Activated CD4-positive, alpha-beta T cell treated with anti-CD3 and anti-CD28 coated beads for 36 hours (primary cell): ENCODE measurements at regions of chr6 and their contacts with region 1.

Region 1: GRCh38 chr6:37860226-37860839 is 40.8 kb downstream of the ZFAND3 start:
- DNase-seq: peak; percentile 24
- ATAC-seq: no peak
- H3K4me3 Mint-ChIP-seq: no peak overlapping the region
- H3K27ac Mint-ChIP-seq: no peak overlapping the region
- H3K4me1 Mint-ChIP-seq: peaks cover 77% of the 10 kb centered on the region
- H3K27me3 Mint-ChIP-seq: no peaks in the 10 kb centered on the region

Region 2: DNA sequence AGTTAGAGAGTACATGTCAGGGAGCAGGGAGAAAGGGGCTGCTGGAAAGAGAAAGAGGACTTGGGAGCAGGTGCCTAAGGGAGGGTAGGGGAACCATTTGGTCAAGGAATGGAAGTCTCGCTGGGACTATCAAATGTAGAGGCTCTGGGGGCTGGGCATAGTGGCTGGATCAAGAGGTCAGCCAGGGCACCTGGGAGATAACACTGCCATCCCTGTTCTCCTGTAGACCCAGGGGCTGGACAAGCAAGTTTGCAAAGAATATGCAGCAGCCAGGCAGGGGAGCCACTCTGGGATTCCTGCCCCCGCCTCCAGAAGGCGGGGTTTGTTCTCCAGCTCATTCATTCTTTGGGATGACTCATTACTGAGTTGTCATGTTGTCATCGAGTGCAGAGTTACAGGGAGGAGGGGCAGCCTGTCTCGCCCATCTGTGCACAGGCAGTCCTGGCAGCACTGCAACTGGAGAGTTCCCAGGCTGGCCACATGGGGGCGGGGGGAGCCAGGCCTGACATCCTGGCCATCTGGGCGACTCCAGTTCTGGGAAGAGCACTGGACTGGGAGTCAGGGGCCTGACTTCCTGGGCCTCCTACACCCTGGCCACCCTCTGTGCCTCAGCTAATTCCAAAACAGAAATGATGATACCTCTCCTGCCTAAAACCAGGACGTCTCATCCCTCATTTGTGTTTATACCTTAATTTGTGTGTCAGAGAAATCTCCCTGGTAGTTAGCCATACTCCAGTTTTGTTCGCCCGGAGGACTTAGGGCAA is 69.0 kb before region 1 on chr6:
- CTCF ChIA-PET with region 1: no interaction called
- POLR2A ChIA-PET with region 1: no interaction called
- intact Hi-C with region 1: loop called in 1 of 2 experiments (anchors 1 kb)
- DNase-seq: peak; percentile 94
- ATAC-seq: peak; percentile 100
- H3K4me3 Mint-ChIP-seq: no peak overlapping the region
- H3K27ac Mint-ChIP-seq: no peak overlapping the region
- H3K4me1 Mint-ChIP-seq: peaks cover 10% of the 10 kb centered on the region
- H3K27me3 Mint-ChIP-seq: no peaks in the 10 kb centered on the region

Region 3: GRCh38 chr6:37840940-37841300 is 19.4 kb before region 1 on chr6:
- CTCF ChIA-PET with region 1: interaction called, 4 read pairs
- POLR2A ChIA-PET with region 1: interaction called, 4 read pairs
- intact Hi-C with region 1: loop called in 1 of 2 experiments (anchors 2 kb)
- DNase-seq: no peak
- ATAC-seq: peak; percentile 42
- H3K4me3 Mint-ChIP-seq: no peak overlapping the region
- H3K27ac Mint-ChIP-seq: peak overlapping the region; percentile 65
- H3K4me1 Mint-ChIP-seq: peaks cover 56% of the 10 kb centered on the region
- H3K27me3 Mint-ChIP-seq: no peaks in the 10 kb centered on the region

Region 4: GRCh38 chr6:37875561-37876309 is 15.4 kb after region 1 on chr6:
- CTCF ChIA-PET with region 1: no interaction called
- POLR2A ChIA-PET with region 1: no interaction called
- intact Hi-C with region 1: no loop called
- DNase-seq: no peak
- ATAC-seq: no peak
- H3K4me3 Mint-ChIP-seq: no peak overlapping the region
- H3K27ac Mint-ChIP-seq: no peak overlapping the region
- H3K4me1 Mint-ChIP-seq: peaks cover 67% of the 10 kb centered on the region
- H3K27me3 Mint-ChIP-seq: no peaks in the 10 kb centered on the region

Region 5: DNA sequence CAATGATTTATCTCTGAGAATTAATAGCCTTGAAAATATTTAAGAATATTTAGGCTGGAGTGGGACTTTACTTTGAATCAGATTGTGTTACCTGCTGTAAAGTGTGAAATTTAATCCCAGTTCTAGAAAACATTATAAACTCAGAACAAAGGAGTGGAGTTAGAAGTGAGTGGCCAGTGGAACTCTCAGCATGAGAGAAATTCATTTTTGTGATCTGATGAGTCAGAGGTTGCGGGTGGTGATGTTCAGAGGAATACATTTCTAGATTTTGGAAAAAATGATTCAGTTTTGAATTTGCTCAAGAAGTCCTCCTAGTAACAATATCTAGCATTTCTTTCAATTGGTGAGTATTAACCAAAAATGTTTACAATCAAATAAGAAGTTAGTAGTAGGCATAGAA is 126.7 kb after region 1 on chr6:
- CTCF ChIA-PET with region 1: interaction called, 3 read pairs
- POLR2A ChIA-PET with region 1: interaction called, 3 read pairs
- intact Hi-C with region 1: loop called in 1 of 2 experiments (anchors 2 kb)
- DNase-seq: peak; percentile 55
- ATAC-seq: peak; percentile 74
- H3K4me3 Mint-ChIP-seq: peak overlapping the region; percentile 7
- H3K27ac Mint-ChIP-seq: peak overlapping the region; percentile 29
- H3K4me1 Mint-ChIP-seq: peaks cover 71% of the 10 kb centered on the region
- H3K27me3 Mint-ChIP-seq: no peaks in the 10 kb centered on the region